Dorsolateral prefrontal cortex (tissue), 120 donors: ENCODE measurements at regions of chr22 and their contacts with region 1.

Region 1: DNA sequence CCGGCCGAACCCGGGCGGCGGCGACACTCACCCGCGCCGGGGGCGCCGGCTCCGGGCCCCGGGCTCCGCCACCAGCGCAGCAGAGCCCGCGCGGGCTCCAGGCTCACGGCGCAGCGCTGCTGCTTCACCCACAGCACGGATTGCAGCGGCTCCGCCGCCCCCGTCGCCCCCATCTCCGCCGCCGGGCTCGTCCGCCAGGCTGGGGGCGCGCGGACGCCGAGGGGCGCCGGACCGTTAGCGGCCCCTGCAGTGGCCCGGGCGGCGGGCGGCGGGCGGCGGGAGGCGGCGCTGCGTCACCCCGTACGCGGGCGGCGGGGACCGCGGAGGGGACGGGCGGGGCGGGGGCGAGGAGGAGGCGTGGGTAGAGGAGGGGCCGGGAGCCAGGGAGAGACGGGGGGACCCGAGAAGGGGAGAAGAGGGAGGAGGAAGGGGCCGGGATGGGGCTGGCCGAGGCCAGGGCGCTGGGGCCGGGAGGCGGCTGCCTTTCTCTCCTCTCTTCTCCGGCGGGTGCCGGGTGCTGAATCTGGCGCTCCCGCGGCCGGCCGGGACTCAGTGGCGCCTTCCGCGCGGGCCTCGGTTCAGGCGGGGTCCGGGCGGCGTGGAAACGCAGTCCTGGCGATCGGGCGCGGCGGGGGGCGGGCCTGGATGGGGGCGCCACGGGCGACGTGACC is at the start of gene CERK:
- DNase-seq: peak in 7 of 10 donors; percentile 54 to 80 (median 61)
- H3K4me3 ChIP-seq: peak within 1 kb of the TSS; percentile 57 to 94 (median 83)
- H3K27ac ChIP-seq: peak within 1 kb of the TSS in 57 of 59 donors; percentile 42 to 93 (median 86)
- H3K27me3 ChIP-seq: no peaks in the 10 kb centered on the region
- CTCF ChIP-seq: peak in 2 of 56 donors; percentile 4 to 9
- total RNA-seq, gene CERK: 24.8 to 72.6 (median 52.4) TPM

Region 2: GRCh38 chr22:46425016-46425415 is 313.1 kb before region 1 on chr22:
- intact Hi-C with region 1: no loop called
- DNase-seq: no peak
- H3K4me3 ChIP-seq: no peak overlapping the region
- H3K27ac ChIP-seq: no peak overlapping the region
- H3K27me3 ChIP-seq: peaks cover 0 to 3% (median 0%) of the 10 kb centered on the region in 45 donors
- CTCF ChIP-seq: no peak

Region 3: GRCh38 chr22:46563381-46564083 is 174.6 kb before region 1 on chr22:
- intact Hi-C with region 1: loop called in 1 of 2 experiments (anchors 10 kb)
- DNase-seq: peak in 9 of 10 donors; percentile 52 to 75 (median 64)
- H3K4me3 ChIP-seq: peak overlapping the region in 7 of 59 donors; percentile 5 to 25 (median 8)
- H3K27ac ChIP-seq: no peak overlapping the region
- H3K27me3 ChIP-seq: no peaks in the 10 kb centered on the region
- CTCF ChIP-seq: peak; percentile 46 to 81 (median 68)

Region 4: GRCh38 chr22:46576556-46577367 is 161.3 kb before region 1 on chr22:
- intact Hi-C with region 1: loop called in 1 of 2 experiments (anchors 5 kb)
- DNase-seq: peak in 4 of 10 donors; percentile 40 to 59 (median 57)
- H3K4me3 ChIP-seq: peak overlapping the region; percentile 8 to 83 (median 73)
- H3K27ac ChIP-seq: peak overlapping the region in 45 of 59 donors; percentile 10 to 87 (median 72)
- H3K27me3 ChIP-seq: no peaks in the 10 kb centered on the region
- CTCF ChIP-seq: no peak